Natural killer cell (primary cell): ENCODE measurements at regions of chr1 and their contacts with region 1.

Region 1: DNA sequence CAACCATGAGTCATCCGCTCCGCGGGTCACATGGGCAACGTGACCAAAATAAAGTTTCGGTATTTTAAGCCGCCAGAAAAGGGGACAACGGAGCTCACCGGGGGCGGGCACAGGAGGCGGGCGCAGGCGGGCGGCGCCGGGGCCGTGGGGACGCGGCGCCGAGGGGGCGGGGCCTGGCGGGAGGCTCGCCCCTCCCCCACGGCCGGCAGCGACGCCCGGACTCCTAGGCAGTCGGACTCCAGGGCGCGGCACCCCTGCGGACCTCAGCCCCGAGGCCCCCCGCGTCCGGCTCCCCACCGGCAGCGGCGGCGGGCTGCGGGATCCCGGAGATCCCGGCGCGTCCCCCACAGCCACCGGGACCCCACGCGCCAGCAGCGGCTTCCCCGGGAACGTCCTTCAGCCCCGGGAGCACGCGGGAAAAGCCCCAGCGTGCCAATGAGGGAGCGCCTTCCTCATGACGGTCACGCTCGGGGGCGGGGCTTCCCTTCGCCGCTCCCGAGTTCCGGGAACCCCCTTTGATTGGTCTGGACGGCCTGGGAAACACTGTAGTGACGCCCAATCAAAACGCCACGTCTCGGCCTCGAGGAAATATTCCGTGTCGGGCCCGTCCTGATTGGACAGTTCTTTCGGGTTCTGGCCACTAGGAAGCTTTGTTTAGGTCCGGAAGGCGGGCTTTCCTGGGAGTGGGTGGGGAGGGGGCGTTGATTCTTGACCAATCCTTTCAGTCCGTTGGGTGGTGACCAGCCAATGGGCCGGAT is 515 bp upstream of the CAMTA1 start:
- DNase-seq: peak; percentile 99 to 100
- ATAC-seq: peak; percentile 77 to 92 (median 79)
- H3K4me3 ChIP-seq: peak overlapping the region; percentile 84
- H3K4me3 Mint-ChIP-seq: peak overlapping the region; percentile 94
- H3K27ac ChIP-seq: peak overlapping the region; percentile 95
- H3K27ac Mint-ChIP-seq: peak overlapping the region; percentile 90 to 95
- H3K4me1 ChIP-seq: peaks cover 9% of the 10 kb centered on the region
- H3K4me1 Mint-ChIP-seq: peaks cover 41 to 47% of the 10 kb centered on the region in 2 donors
- H3K27me3 ChIP-seq: no peaks in the 10 kb centered on the region
- H3K27me3 Mint-ChIP-seq: no peaks in the 10 kb centered on the region
- CTCF ChIP-seq: no peak

Region 2: GRCh38 chr1:6701437-6702153 is 83.1 kb before region 1 on chr1 and contains the start of gene DNAJC11:
- intact Hi-C with region 1: loop called (anchors 5 kb)
- DNase-seq: peak; percentile 95 to 96
- ATAC-seq: peak; percentile 97 to 100 (median 97)
- H3K4me3 ChIP-seq: peak within 1 kb of the TSS; percentile 81
- H3K4me3 Mint-ChIP-seq: peak within 1 kb of the TSS; percentile 90
- H3K27ac ChIP-seq: peak within 1 kb of the TSS; percentile 40
- H3K27ac Mint-ChIP-seq: peak within 1 kb of the TSS; percentile 45 to 87
- H3K4me1 ChIP-seq: peaks cover 12% of the 10 kb centered on the region
- H3K4me1 Mint-ChIP-seq: peaks cover 22 to 26% of the 10 kb centered on the region in 2 donors
- H3K27me3 ChIP-seq: no peaks in the 10 kb centered on the region
- H3K27me3 Mint-ChIP-seq: peaks cover 0 to under 1% of the 10 kb centered on the region in 2 donors
- CTCF ChIP-seq: peak; percentile 95
- total RNA-seq, gene DNAJC11: 28.7 to 40.1 (median 36.2) TPM

Region 3: DNA sequence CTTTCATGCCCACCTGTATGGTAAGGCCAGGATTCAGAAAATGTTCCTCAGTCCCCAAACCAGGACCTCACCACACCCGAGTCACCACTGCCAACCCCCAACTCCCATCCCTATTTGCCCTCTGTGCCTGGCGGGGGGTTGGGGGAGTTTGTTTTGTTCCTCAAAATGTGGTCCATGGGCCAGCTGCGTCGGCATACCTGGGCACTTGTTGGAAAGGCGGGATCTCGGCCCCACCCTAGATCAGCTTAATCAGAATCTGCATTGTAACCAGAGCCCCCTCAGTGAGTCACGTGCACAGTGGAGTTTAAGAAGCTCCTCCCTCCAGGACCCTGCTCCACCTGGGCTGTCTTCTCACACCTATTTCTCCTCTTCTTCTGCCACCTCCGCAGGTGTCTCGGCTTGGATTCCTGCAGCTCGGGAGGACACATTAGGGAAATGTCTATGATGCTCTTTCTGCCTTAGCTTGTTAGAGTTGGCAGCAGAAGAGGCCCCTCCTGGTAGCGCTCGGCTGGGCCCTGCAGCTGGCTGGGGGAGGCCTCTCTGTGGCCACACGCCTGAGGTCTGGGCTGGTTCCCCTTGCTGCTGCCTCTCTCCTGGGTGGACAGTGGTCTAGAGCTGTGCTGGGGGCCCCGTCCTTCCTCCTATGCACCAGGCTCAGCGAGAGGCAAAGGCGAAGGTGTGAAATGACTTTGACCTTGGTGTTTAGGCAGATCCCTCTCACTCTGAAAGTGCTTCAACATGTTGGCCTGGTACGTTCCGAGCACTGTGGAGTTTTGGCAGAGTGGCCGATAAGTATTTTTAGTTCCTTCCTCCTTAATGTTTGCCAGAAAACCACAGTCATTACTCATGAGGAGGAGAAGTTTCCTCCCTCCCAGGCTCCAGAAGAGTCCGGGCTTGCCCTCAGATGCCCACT is 41.3 kb before region 1 on chr1:
- intact Hi-C with region 1: loop called (anchors 5 kb)
- DNase-seq: peak; percentile 19 to 29
- ATAC-seq: peak; percentile 37 to 57 (median 48)
- H3K4me3 ChIP-seq: no peak overlapping the region
- H3K4me3 Mint-ChIP-seq: no peak overlapping the region
- H3K27ac ChIP-seq: peak overlapping the region; percentile 5
- H3K27ac Mint-ChIP-seq: peak overlapping the region in 1 of 2 donors; percentile 75
- H3K4me1 ChIP-seq: peaks cover 8% of the 10 kb centered on the region
- H3K4me1 Mint-ChIP-seq: peaks cover 7 to 13% of the 10 kb centered on the region in 2 donors
- H3K27me3 ChIP-seq: no peaks in the 10 kb centered on the region
- H3K27me3 Mint-ChIP-seq: peaks cover 0 to 6% of the 10 kb centered on the region in 2 donors
- CTCF ChIP-seq: no peak

Region 4: GRCh38 chr1:6889875-6890480 is 105.2 kb after region 1 on chr1:
- intact Hi-C with region 1: no loop called
- DNase-seq: peak; percentile 19 to 64
- ATAC-seq: peak in 1 of 3 donors; percentile 64
- H3K4me3 ChIP-seq: no peak overlapping the region
- H3K4me3 Mint-ChIP-seq: no peak overlapping the region
- H3K27ac ChIP-seq: no peak overlapping the region
- H3K27ac Mint-ChIP-seq: no peak overlapping the region
- H3K4me1 ChIP-seq: no peaks in the 10 kb centered on the region
- H3K4me1 Mint-ChIP-seq: no peaks in the 10 kb centered on the region
- H3K27me3 ChIP-seq: no peaks in the 10 kb centered on the region
- H3K27me3 Mint-ChIP-seq: no peaks in the 10 kb centered on the region
- CTCF ChIP-seq: peak; percentile 63

Region 5: GRCh38 chr1:7783826-7784491 is 999.2 kb after region 1 on chr1 and contains the start of gene PER3:
- intact Hi-C with region 1: loop called (anchors 10 kb)
- DNase-seq: peak; percentile 94 to 97
- ATAC-seq: peak; percentile 88 to 96 (median 89)
- H3K4me3 ChIP-seq: peak within 1 kb of the TSS; percentile 63
- H3K4me3 Mint-ChIP-seq: peak within 1 kb of the TSS; percentile 76
- H3K27ac ChIP-seq: peak within 1 kb of the TSS; percentile 76
- H3K27ac Mint-ChIP-seq: peak within 1 kb of the TSS; percentile 57 to 82
- H3K4me1 ChIP-seq: peaks cover 35% of the 10 kb centered on the region
- H3K4me1 Mint-ChIP-seq: peaks cover 21 to 25% of the 10 kb centered on the region in 2 donors
- H3K27me3 ChIP-seq: no peaks in the 10 kb centered on the region
- H3K27me3 Mint-ChIP-seq: no peaks in the 10 kb centered on the region
- CTCF ChIP-seq: no peak
- total RNA-seq, gene PER3: 9.1 to 20.8 (median 19.2) TPM